ENCODE measurements at regions of chr15 and their contacts with region 1.

Region 1: DNA sequence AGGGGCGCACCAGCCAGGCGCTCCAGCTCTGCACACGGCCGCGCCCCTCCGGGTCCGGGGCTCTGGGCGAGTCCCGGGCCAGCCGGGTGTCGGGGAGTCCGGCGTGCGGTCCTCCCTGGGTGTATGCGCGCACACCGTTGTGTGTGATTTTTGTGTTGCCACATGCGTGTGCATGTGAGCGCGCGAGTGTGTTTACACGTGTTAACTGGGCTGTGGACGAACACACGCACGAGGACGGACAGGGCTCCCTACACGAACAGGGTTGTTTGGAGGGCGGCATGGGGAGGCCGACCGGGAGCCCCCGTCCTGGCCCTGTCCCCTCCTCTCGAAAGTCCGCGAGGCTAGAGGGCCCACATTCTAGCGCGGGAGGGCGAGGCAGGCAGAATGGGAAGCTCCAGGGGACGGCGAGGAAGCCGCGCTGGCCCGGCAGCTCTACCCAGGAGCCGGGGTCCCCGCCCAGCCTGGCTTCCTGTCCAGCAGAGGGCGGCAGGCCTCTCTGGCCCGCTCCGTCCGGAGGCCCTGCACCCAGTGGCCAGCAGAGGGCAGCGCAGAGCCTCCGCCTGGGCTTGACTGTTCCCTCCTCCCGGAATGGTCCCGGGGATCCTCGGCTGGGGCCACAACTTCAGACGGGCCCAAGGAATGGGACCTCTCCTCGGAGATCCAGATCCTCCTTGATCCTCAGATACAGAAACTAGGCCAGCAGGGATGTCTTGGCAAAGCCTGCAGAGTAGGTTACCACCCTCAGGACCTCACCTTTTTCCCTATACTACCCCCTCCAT is 611 bp upstream of the LINGO1 start:
- DNase-seq: peak; percentile 91
- H3K4me3 ChIP-seq: peak overlapping the region; percentile 48 to 50
- H3K27ac ChIP-seq: no peak overlapping the region
- H3K4me1 ChIP-seq: peaks cover 7% of the 10 kb centered on the region
- H3K27me3 ChIP-seq: peaks cover 5% of the 10 kb centered on the region
- CTCF ChIP-seq: peak; percentile 97 to 99 (median 98)
- POLR2A ChIP-seq: no peak

Region 2: GRCh38 chr15:77554306-77555080 is 78.8 kb before region 1 on chr15:
- intact Hi-C with region 1: no loop called
- DNase-seq: no peak
- H3K4me3 ChIP-seq: no peak overlapping the region
- H3K27ac ChIP-seq: no peak overlapping the region
- H3K4me1 ChIP-seq: peaks cover 4% of the 10 kb centered on the region
- H3K27me3 ChIP-seq: no peaks in the 10 kb centered on the region
- CTCF ChIP-seq: no peak
- POLR2A ChIP-seq: no peak

Region 3: DNA sequence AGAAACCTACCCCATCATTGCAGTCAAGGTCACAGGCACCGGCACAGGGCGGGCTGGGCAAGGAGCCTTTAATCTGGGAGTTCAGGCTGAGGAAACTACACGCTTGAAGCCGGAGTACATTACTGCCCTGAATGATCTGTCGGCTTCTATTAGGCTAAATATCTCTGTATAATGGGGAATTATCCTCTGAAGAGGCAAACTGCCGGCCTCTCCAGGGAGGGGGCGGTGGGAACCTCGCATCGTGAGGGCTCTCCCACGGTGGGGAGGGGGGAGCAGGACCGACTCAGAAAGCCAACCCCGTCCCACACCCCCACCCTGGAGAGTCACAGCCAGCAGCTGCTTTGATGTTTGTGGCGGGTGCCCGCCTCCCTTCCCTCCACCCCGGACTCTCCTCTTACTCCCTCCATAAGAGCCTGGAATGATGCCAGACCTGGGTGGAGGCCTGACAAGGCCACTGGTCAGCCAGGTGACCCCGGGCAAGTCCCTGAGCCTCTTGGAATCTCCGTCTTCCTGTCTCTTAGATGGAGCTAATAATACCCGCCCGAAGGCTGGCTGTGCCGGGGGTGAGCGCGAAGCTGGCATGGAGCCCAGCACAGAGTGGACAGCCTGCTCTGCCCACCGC is 62.7 kb after region 1 on chr15:
- intact Hi-C with region 1: no loop called
- DNase-seq: peak; percentile 45
- H3K4me3 ChIP-seq: no peak overlapping the region
- H3K27ac ChIP-seq: no peak overlapping the region
- H3K4me1 ChIP-seq: peaks cover 9% of the 10 kb centered on the region
- H3K27me3 ChIP-seq: no peaks in the 10 kb centered on the region
- CTCF ChIP-seq: no peak
- POLR2A ChIP-seq: no peak

Region 4: GRCh38 chr15:77819841-77820728 is 186.8 kb after region 1 on chr15:
- intact Hi-C with region 1: loop called (anchors 5 kb)
- DNase-seq: peak; percentile 45
- H3K4me3 ChIP-seq: peak overlapping the region; percentile 26 to 40
- H3K27ac ChIP-seq: no peak overlapping the region
- H3K4me1 ChIP-seq: no peaks in the 10 kb centered on the region
- H3K27me3 ChIP-seq: no peaks in the 10 kb centered on the region
- CTCF ChIP-seq: no peak
- POLR2A ChIP-seq: no peak

Measured in testis (tissue), 5 donors.